GM12878 (cell line): ENCODE measurements at regions of chr2 and their contacts with region 1.

Region 1: GRCh38 chr2:231563378-231563961 is 29.2 kb upstream of the TEX44 start:
- DNase-seq: no peak
- ATAC-seq: peak; percentile 99
- H3K4me3 ChIP-seq: no peak overlapping the region
- H3K27ac ChIP-seq: no peak overlapping the region
- H3K4me1 ChIP-seq: no peaks in the 10 kb centered on the region; the same call in 1 of the 2 replicates
- H3K27me3 ChIP-seq: no peaks in the 10 kb centered on the region
- CTCF ChIP-seq: peak; percentile 59 to 89 (median 85); a peak in 5 of 6 replicates
- EP300 ChIP-seq: no peak
- POLR2A ChIP-seq: no peak
- RAD21 ChIP-seq: peak; percentile 83

Region 2: DNA sequence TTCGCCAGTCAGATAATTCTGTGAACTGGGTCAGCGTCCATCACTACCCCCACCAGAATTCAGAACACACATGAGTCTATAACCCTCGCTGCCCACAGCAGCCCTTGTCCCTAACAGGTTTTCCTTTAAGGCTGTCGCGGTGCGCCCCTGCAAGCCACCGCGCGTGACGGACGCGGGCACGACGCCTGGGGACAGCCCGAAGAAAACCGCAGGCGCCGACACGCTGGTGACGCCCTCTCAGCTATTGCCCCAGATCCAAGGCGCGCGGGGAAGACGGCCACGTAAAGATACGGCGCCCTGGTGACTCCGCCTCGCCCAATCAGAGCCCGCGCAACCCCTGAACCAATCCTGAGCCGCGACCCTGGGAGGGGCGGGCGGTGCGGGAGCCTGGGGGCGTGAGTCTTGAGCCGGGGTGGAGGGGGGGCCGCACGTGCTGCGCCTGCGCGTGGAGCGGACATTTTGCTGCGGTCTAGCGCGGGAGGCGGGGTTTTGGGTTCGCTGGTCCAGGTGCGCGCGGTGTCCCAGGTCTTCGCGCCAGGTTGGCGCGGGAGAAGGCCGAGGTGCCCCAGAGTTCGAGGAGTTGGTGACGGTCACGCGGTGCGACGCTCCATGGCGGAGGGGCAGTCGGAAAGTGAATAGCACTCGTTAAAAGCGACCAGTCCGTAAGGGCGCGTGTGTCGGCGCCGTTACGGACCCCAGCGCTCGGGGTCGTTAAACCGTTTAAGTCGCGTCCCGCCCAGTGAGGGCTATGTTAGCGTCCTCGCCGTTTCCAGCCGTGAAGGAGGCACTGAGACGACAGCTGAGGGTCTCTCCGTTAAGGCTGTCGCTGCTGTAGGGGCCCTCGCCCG is 49.1 kb before region 1 on chr2:
- CTCF ChIA-PET with region 1: interaction called, 84 read pairs
- POLR2A ChIA-PET with region 1: no interaction called
- RAD21 ChIA-PET with region 1: interaction called, 8 read pairs
- SMC1A ChIA-PET with region 1: interaction called, 31 read pairs
- in situ Hi-C with region 1: no loop called
- intact Hi-C with region 1: loop called (anchors 1 kb)
- DNase-seq: peak; percentile 81
- ATAC-seq: peak; percentile 100
- H3K4me3 ChIP-seq: peak overlapping the region; percentile 91
- H3K27ac ChIP-seq: peak overlapping the region; percentile 82
- H3K4me1 ChIP-seq: peaks cover 9% of the 10 kb centered on the region
- H3K27me3 ChIP-seq: no peaks in the 10 kb centered on the region
- CTCF ChIP-seq: no peak
- EP300 ChIP-seq: no peak
- POLR2A ChIP-seq: peak; percentile 97
- RAD21 ChIP-seq: no peak

Region 3: GRCh38 chr2:231522799-231523180 is 40.7 kb before region 1 on chr2:
- CTCF ChIA-PET with region 1: interaction called, 84 read pairs
- POLR2A ChIA-PET with region 1: no interaction called
- RAD21 ChIA-PET with region 1: interaction called, 8 read pairs
- SMC1A ChIA-PET with region 1: interaction called, 31 read pairs
- in situ Hi-C with region 1: loop called (anchors 5 kb)
- intact Hi-C with region 1: loop called (anchors 1 kb)
- DNase-seq: no peak
- ATAC-seq: no peak
- H3K4me3 ChIP-seq: no peak overlapping the region
- H3K27ac ChIP-seq: no peak overlapping the region
- H3K4me1 ChIP-seq: peaks cover 5% of the 10 kb centered on the region
- H3K27me3 ChIP-seq: no peaks in the 10 kb centered on the region
- CTCF ChIP-seq: no peak
- EP300 ChIP-seq: no peak
- POLR2A ChIP-seq: no peak
- RAD21 ChIP-seq: no peak

Region 4: DNA sequence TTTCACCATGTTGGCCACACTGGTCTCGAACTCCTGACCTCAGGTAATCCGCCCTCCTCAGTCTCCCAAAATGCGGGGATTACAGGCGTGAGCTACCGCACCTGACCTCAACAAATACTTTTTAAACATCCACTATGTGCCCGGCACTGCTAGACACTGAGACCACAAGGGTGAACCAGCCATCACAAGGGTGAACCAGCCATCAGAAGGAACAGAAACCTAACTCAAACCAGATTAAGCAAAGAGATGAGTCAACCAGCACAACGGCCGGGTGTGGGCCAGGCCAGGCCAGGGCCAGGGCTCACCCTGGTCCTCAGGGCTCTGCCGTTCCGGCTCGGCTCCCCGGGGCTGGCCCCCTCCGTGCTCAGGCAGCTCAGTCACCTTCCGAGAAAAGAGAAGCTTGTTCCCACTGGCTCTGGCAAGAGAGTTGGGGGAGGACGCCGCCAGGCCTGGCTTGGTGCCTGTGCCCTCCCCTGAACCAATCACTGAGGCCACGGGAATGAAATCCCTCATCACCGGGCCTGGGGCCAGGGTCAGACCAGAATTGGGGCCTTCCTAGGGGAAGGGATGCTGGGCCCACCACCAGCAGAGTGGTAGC is 33.6 kb after region 1 on chr2:
- CTCF ChIA-PET with region 1: interaction called, 218 read pairs
- POLR2A ChIA-PET with region 1: interaction called, 5 read pairs
- RAD21 ChIA-PET with region 1: interaction called, 118 read pairs
- SMC1A ChIA-PET with region 1: interaction called, 112 read pairs
- in situ Hi-C with region 1: no loop called
- intact Hi-C with region 1: loop called (anchors 1 kb)
- DNase-seq: peak; percentile 83
- ATAC-seq: peak; percentile 97
- H3K4me3 ChIP-seq: no peak overlapping the region
- H3K27ac ChIP-seq: peak overlapping the region; percentile 51
- H3K4me1 ChIP-seq: peaks cover 24% of the 10 kb centered on the region
- H3K27me3 ChIP-seq: no peaks in the 10 kb centered on the region
- CTCF ChIP-seq: no peak
- EP300 ChIP-seq: peak in 1 of 2 experiments; percentile 68; a peak in 1 of 4 replicates
- POLR2A ChIP-seq: no peak
- RAD21 ChIP-seq: no peak

Region 5: DNA sequence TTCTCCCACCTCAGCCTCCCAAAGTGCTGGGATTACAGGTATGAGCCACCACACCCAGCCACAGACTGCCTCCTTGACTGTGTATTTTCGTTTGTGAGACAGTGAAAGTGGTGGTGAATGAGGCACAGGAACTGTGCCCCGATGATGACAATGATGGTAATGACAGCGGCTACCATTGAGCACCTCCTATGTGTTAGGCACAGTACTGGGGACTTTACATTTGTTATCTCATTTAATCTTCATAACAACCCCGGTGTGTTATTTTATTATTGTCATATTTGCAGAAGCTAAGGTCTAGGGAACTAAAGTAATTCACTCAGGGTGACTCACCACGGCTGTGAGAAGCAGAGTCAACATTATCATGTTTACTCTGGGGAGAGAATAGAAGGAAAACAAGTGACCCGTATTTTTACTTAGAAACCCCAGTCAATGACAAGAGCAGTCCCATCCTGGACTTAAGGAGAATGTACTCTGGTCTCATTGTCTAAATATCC is 737.5 kb after region 1 on chr2:
- CTCF ChIA-PET with region 1: no interaction called
- POLR2A ChIA-PET with region 1: no interaction called
- RAD21 ChIA-PET with region 1: no interaction called
- SMC1A ChIA-PET with region 1: no interaction called
- in situ Hi-C with region 1: no loop called
- intact Hi-C with region 1: no loop called
- DNase-seq: no peak
- ATAC-seq: no peak
- H3K4me3 ChIP-seq: no peak overlapping the region
- H3K27ac ChIP-seq: no peak overlapping the region
- H3K4me1 ChIP-seq: no peaks in the 10 kb centered on the region
- H3K27me3 ChIP-seq: no peaks in the 10 kb centered on the region
- CTCF ChIP-seq: no peak
- EP300 ChIP-seq: no peak
- POLR2A ChIP-seq: no peak
- RAD21 ChIP-seq: no peak